ENCODE measurements at regions of chr21 and their contacts with region 1.

Region 1: DNA sequence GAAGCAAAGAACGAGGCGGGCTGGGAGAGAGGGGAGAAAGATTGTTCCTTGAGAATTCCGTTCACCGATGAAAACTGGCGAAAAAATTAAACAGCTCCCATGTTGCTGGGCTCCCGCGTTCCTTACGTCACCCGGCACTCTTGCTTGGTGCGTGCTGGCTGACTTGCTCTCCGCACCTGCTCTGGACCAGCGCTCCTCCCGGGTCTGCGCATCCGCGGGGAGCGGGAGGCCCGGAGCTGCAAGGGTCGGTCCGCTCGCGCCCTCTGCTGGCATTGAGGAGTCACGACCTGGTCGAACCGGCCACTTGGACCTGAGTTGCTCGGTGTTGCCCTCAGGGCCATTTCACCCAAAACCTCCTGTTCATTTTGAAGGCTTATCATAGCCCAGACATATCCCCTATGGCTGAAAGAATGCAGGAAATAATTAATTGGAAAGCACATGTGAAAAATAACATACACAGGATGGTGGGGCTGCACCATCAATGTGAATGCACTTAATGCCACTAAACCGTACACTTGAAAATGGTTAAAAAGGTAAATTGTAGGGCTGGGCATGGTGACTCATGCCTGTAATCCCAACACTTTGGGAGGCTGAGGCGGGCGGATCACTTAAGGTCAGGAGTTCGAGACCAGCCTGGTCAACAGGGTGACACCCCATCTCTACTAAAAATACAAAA is 98.9 kb upstream of the BACE2 start:
- DNase-seq: peak; percentile 81 to 96 (median 91)

Region 2: GRCh38 chr21:40143822-40144525 is 925.1 kb before region 1 on chr21:
- intact Hi-C with region 1: loop called (anchors 5 kb)
- DNase-seq: peak; percentile 29 to 92 (median 82)

Region 3: DNA sequence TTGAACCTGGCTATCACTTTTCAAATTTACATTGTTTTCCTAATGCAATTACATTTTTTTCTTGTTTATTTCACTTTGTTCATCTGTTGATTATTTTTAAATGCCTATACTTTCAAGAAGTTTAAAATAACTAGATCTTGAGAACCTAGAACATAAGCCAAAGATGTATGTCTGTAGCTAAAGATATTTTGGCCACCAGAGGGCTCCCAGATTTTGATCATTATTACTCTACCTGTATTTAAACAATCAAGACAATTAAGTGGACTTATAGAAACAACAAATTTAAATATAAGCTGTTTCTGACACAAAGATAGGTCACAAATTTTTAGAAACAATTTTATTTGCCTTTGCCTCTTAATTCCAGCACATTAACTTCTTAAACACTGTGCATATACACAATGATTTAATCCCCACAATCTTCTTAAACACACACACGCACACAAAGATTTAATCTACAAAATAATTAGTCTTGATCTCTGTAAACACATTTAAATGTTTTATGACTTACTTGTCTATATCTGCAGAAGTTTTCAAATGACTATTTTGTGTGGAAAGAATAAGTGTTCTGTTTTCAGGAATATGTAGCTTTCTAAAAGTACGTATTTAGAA is 602.1 kb before region 1 on chr21:
- intact Hi-C with region 1: loop called (anchors 10 kb)
- DNase-seq: peak in 15 of 42 donors; percentile 18 to 65 (median 32)